AG04450 (cell line): ENCODE measurements at regions of chr7 and their contacts with region 1.

Region 1: DNA sequence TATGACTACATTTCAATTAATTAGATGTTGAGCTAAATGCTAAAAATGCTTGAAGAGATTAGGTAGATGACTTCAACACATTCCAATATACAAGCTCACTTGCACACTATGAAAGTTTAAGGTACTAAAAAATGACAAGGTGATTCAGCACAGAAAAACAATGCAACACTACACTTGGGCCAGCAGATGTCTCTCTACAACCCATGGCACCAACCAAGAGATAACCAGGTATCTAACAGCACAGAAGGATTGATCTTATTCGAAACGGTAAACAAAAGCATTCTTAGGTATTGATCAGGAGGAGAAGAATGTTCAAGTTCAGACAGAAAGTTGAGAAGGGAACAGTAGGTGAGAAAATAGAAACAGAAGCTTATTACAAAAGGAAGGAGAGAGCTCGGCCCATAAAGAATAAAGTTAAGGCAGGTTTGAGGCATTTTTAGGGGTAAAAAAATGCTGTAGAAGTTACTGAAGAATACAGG is 248.2 kb upstream of the KLF14 start:
- DNase-seq: no peak
- H3K4me3 ChIP-seq: no peak overlapping the region
- H3K27ac ChIP-seq: no peak overlapping the region
- H3K27me3 ChIP-seq: no peaks in the 10 kb centered on the region
- CTCF ChIP-seq: peak; percentile 78

Region 2: DNA sequence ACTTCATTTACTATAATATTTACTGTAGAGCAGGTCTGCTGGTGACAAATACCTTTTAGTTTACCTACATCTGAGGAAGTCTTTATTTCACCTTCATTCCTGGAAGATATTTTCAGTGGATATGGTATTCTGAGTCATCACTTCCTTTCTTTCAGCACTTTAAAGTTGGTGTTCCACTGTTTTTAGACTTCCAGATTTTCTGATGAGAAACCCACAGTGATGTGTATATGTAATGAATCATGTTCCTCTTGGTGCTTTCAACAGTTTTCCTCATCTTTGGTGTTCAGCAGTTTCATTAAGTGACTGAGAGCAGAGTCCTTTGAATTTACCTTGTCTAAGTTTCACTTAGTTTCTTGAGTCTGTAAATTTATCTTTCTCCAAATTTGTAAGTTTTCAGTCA is 350.1 kb before region 1 on chr7:
- CTCF ChIA-PET with region 1: no interaction called
- POLR2A ChIA-PET with region 1: no interaction called
- DNase-seq: no peak
- H3K4me3 ChIP-seq: no peak overlapping the region
- H3K27ac ChIP-seq: no peak overlapping the region
- H3K27me3 ChIP-seq: no peaks in the 10 kb centered on the region
- CTCF ChIP-seq: no peak

Region 3: GRCh38 chr7:130961128-130961601 is 21.0 kb before region 1 on chr7:
- CTCF ChIA-PET with region 1: interaction called, 20 read pairs
- POLR2A ChIA-PET with region 1: no interaction called
- DNase-seq: no peak
- H3K4me3 ChIP-seq: peak overlapping the region; percentile 26
- H3K27ac ChIP-seq: peak overlapping the region; percentile 97
- H3K27me3 ChIP-seq: no peaks in the 10 kb centered on the region
- CTCF ChIP-seq: no peak

Region 4: GRCh38 chr7:130966246-130967009 is 15.8 kb before region 1 on chr7:
- CTCF ChIA-PET with region 1: interaction called, 25 read pairs
- POLR2A ChIA-PET with region 1: no interaction called
- DNase-seq: no peak
- H3K4me3 ChIP-seq: no peak overlapping the region
- H3K27ac ChIP-seq: peak overlapping the region; percentile 49
- H3K27me3 ChIP-seq: no peaks in the 10 kb centered on the region
- CTCF ChIP-seq: no peak

Region 5: GRCh38 chr7:130996841-130997231 is 14.6 kb after region 1 on chr7:
- CTCF ChIA-PET with region 1: interaction called, 50 read pairs
- POLR2A ChIA-PET with region 1: no interaction called
- DNase-seq: no peak
- H3K4me3 ChIP-seq: no peak overlapping the region
- H3K27ac ChIP-seq: peak overlapping the region; percentile 12
- H3K27me3 ChIP-seq: no peaks in the 10 kb centered on the region
- CTCF ChIP-seq: no peak

Region 6: DNA sequence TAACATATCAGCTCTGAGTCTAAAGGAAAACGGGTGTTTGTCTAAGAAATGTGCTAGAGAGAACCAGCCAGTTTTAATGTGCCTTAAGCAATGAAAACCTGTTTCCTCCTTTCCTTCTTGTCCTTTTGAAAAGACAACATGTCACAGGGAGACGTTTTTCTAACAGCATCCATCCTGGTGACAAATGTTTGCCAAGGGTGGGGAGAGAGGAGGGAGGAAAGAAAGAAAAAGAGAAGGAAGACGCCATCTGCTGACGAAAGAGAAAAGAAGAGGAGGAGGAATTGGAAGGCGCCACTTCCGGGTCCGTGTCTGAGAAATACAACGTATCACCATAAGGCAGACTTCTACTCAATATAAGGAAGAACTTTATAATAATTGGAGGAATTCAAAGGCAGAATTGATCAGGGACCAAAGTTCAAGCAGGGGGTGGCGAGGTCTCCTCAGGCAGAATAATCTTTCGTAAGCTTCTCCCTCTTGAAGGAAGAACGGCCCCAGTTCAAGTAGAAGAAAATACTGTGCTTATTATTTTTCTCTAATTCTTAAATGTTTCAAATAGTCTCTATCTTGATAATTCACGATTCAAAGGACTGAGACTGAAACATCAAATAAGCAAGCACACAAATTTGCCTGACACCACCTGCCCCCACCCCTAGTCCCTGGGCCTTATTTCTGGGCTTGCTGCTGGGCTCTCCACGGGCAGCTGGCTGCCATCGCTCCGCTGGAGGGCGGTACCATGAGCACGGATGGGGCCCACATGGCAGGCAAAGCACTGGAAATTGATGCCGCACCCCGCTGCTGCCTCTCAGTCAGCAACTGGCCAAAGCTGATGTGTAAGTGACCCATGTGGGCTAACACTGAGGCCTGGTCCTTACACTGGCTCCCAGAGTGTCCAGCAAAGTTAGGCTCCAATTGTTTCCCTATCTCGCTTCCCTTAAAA is 25.5 kb after region 1 on chr7:
- CTCF ChIA-PET with region 1: interaction called, 18 read pairs
- POLR2A ChIA-PET with region 1: no interaction called
- DNase-seq: no peak
- H3K4me3 ChIP-seq: no peak overlapping the region
- H3K27ac ChIP-seq: peak overlapping the region; percentile 43
- H3K27me3 ChIP-seq: no peaks in the 10 kb centered on the region
- CTCF ChIP-seq: peak; percentile 72

Region 7: DNA sequence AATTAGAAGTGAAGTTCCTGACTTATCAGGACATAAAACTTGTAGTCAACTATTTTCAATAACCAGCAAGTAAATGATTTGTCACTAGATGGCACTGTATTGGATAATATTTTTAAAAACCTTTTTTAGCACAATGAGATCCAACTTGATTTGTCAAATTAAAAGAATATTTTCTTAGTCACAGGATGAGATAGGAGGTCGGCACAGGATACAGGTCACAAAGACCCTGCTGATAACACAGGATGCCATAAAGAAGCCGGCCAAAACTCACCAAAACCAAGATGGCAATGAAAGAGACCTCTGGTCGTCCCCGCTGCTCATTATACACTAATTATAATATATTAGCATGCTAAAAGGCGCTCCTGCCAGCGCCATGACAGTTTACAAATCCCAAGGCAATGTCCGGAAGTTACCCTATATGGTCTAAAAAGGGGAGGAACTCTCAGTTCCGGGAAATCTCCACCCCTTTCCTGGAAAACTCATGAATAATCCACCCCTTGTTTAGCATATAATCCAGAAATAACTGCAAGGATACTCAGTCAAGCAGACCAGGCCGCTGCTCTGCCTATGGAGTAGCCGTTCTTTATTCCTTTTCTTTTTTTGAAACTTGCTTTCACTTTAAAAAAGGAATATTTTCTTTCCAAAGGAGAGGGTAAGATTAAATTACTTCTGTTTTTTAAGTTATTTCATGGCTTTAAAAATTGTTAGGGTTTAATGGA is 89.7 kb after region 1 on chr7:
- CTCF ChIA-PET with region 1: interaction called, 10 read pairs
- POLR2A ChIA-PET with region 1: no interaction called
- DNase-seq: no peak
- H3K4me3 ChIP-seq: no peak overlapping the region
- H3K27ac ChIP-seq: no peak overlapping the region
- H3K27me3 ChIP-seq: no peaks in the 10 kb centered on the region
- CTCF ChIP-seq: peak; percentile 46